OCI-LY7 (cell line): ENCODE measurements at regions of chr6 and their contacts with region 1.

Region 1: GRCh38 chr6:26204332-26205165 is 117.3 kb downstream of the HFE start:
- DNase-seq: peak; percentile 98
- H3K4me3 ChIP-seq: peak overlapping the region; percentile 79
- H3K27ac ChIP-seq: peak overlapping the region; percentile 93
- H3K4me1 ChIP-seq: peaks cover 63% of the 10 kb centered on the region
- CTCF ChIP-seq: peak; percentile 61

Region 2: DNA sequence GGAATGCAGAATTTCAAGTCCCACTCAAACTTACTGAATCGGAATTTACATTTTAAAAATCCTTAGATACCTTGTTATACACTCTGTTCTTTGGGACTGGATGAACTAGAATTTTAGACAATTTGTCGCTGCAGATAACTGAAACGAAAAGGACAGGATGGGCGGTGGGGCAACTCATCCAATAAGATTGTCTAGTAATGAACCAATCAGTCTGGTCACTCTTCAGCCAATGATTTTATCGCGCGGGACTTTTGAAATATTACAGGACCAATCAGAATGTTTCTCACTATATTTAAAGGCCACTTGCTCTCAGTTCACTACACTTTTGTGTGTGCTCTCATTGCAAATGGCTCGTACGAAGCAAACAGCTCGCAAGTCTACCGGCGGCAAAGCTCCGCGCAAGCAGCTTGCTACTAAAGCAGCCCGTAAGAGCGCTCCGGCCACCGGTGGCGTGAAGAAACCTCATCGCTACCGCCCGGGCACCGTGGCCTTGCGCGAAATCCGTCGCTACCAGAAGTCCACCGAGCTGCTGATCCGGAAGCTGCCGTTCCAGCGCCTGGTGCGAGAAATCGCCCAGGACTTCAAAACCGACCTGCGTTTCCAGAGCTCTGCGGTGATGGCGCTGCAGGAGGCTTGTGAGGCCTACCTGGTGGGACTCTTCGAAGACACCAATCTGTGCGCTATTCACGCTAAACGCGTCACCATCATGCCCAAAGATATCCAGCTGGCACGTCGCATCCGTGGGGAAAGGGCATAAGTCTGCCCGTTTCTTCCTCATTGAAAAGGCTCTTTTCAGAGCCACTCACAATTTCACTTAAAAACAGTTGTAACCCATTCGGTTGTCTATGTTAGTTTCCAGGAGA is 159.3 kb before region 1 on chr6:
- CTCF ChIA-PET with region 1: interaction called, 3 read pairs
- POLR2A ChIA-PET with region 1: interaction called, 43 read pairs
- intact Hi-C with region 1: no loop called
- DNase-seq: peak; percentile 97
- H3K4me3 ChIP-seq: peak overlapping the region; percentile 67
- H3K27ac ChIP-seq: peak overlapping the region; percentile 99
- H3K4me1 ChIP-seq: peaks cover 66% of the 10 kb centered on the region
- CTCF ChIP-seq: peak; percentile 54